Testis (tissue), 5 donors: ENCODE measurements at regions of chr7 and their contacts with region 1.

Region 1: DNA sequence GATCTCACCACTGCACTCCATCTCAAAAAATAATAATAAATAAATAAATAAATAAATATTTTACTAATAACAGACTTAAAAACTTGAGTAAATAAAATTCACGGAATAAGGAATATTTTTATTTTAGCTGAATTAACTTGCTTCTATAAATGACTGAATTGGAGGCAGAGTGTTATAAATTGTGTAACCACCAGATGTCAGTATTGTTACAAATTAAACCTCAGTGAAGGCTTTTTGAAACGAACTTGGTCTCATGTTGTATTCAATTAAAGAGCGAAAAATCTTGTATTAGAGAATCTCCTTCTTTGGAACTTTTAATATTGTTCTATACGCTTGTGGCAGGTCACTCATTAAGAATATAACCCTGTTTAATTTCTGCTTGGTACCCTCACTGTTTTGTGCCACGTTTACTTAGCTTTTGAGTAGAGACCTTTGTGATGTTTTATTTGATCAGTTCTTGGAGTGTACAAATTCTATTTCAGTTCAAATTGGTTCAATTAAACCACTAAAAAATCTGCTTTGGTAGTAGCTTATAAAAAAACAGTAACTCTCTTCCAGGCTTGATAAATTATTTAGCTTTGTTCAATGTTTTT is 45.6 kb upstream of the SCIN start:
- DNase-seq: no peak
- H3K4me3 ChIP-seq: no peak overlapping the region
- H3K27ac ChIP-seq: no peak overlapping the region
- H3K4me1 ChIP-seq: no peaks in the 10 kb centered on the region
- H3K27me3 ChIP-seq: no peaks in the 10 kb centered on the region
- CTCF ChIP-seq: peak; percentile 34 to 64 (median 50)
- POLR2A ChIP-seq: no peak

Region 2: DNA sequence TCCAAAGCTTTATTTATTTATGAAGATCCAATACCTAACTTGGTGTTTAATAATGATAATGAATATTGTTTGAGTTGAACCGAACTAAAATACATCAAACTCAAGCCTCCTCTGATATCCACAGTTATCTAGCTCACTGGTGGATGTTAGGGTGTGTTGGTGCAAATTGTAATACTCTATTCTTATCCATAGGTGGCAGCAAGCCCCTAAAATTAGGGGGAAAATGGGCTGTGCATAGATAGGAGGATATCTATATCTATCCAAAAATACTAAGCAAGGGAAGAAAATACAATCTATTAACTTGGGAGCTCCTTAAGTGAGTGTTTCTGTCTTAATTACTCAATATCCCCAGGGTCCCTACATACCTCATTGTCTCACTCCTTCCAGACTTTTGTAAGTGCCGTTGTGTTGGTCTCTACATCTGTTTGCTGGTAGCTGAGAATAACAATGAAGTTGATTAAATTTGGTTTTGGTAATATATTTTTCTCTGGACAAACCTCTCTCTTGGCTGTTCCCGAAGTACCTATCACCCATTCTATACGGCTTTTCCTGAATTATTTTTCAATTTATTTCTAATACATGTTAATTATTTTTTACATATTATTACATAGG is 66.3 kb before region 1 on chr7:
- intact Hi-C with region 1: no loop called
- DNase-seq: no peak
- H3K4me3 ChIP-seq: no peak overlapping the region
- H3K27ac ChIP-seq: no peak overlapping the region
- H3K4me1 ChIP-seq: no peaks in the 10 kb centered on the region
- H3K27me3 ChIP-seq: no peaks in the 10 kb centered on the region
- CTCF ChIP-seq: peak in 2 of 3 experiments; percentile 38 to 70
- POLR2A ChIP-seq: no peak

Region 3: DNA sequence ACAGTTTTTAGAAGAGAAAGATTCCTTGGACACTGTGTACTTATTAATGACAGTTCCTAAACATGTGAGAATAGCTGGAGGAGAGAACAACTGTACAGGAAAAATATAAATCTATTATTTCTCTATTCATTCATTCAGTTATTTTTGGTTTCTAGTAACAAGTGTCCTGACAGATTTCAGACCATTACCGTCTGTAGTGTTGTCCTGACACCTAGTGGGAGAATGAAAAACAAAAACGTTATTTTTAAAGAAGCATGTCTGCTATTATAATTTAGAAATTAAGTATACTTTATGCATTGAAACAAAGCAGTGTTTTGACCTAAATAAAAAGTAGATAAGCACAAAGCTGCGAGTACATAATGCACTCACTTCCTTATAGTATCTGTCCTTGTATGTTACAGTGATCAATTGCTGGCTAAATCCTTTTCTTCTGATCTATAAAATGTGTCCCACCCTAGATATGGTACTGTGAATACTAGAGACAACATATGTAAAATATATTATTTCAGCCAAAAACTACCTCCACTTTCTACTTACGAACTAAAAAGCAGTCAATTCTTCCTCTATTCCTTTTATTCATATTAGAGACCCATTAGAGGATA is 738.1 kb after region 1 on chr7:
- intact Hi-C with region 1: loop called (anchors 5 kb)
- DNase-seq: no peak
- H3K4me3 ChIP-seq: no peak overlapping the region
- H3K27ac ChIP-seq: no peak overlapping the region
- H3K4me1 ChIP-seq: no peaks in the 10 kb centered on the region
- H3K27me3 ChIP-seq: no peaks in the 10 kb centered on the region
- CTCF ChIP-seq: peak; percentile 36 to 48 (median 47)
- POLR2A ChIP-seq: no peak